CD4-positive, alpha-beta memory T cell (primary cell): ENCODE measurements at regions of chr17 and their contacts with region 1.

Region 1: DNA sequence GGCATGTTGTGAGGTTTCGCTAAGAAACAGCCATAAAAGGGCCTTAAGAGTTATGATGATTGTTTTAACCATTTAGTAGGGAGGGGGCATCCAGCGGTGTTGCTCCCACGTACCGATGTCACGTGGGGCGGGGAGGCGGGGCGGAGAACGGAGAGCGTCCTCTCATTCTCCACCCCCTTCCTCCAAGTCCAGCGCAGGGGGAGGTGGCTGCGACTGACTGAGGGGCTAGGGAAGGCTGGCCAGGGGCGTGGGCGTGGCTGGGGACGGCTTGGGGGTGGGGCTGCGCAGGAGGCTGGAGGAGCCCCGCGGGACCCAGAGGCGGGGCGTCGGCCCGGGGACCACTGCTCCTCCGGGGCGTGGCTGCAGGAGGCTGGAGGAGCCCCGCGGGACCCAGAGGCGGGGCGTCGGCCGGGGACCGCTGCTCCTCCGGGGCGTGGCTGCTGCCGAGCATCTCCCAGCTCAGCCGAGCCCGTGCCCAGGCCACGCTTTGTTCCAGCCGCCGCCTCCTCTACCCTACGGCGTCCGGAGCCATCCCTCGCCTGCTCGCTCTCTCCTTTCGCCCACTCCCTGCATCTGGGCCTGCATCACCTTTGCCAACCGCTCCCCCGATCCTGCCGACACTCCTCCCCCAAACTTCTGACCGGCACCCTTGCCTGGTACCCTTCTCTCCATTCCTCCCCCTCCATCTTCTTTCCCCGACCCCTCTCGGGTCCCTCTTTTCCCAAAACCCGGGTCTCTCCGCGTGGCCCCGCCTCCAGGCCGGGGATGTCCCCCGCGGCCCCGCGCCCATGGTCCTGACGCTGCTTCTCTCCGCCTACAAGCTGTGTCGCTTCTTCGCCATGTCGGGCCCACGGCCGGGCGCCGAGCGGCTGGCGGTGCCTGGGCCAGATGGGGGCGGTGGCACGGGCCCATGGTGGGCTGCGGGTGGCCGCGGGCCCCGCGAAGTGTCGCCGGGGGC is at the start of gene SARM1:
- DNase-seq: peak; percentile 73 to 87 (median 79)
- H3K4me3 ChIP-seq: peak within 1 kb of the TSS in 1 of 2 donors; percentile 81
- H3K4me3 Mint-ChIP-seq: peak within 1 kb of the TSS; percentile 91 to 100 (median 96)
- H3K27ac ChIP-seq: peak within 1 kb of the TSS; percentile 85
- H3K27ac Mint-ChIP-seq: peak within 1 kb of the TSS; percentile 88 to 99 (median 97)
- H3K4me1 ChIP-seq: peaks cover 14% of the 10 kb centered on the region
- H3K4me1 Mint-ChIP-seq: peaks cover 13 to 29% (median 17%) of the 10 kb centered on the region in 4 donors
- H3K27me3 ChIP-seq: no peaks in the 10 kb centered on the region
- H3K27me3 Mint-ChIP-seq: no peaks in the 10 kb centered on the region
- total RNA-seq, gene SARM1: 37.6 to 40.3 TPM

Region 2: DNA sequence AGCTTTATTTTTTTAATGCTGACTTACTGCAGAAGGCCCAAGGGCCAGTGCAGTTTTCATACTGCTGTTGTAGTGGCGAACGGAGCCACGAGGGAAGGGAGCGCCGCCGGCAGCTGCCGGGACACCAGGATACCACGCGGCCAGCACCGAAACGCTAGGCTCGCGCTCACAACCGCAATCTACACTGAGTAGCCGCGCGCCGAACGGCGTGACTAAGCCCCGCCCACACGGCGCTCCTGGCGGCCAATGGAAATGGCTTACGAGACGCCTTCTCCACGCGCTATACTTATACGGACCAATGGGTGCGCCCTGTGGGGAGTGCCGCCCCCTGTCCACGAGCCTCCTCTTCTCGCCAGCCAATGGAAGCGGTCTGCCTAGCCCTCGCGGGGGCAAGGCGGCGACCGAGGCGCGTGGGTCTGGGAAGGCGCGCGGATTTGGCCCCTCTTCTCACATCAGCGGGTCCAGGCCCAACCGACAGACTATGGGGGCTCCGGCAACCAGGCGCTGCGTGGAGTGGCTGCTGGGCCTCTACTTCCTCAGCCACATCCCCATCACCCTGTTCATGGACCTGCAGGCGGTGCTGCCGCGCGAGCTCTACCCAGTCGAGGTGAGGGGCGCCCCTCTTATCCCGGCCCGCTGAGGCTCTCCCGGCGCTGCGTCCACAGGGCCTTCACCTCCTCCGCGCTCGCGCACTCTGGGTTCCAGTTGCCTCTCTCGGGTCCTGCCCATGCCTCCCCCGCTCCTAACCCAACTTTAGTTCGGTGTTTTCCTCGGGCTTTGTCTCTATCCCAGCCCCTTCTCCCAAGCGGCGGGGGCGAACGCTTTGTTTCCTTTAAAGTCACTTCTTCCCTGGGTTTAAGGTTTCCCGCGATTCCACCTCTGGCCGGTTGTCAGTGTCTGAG is 52.5 kb before region 1 on chr17 and contains the start of gene TMEM97:
- CTCF ChIA-PET with region 1: no interaction called
- POLR2A ChIA-PET with region 1: interaction called, 4 read pairs
- intact Hi-C with region 1: loop called (anchors 1 kb)
- DNase-seq: peak; percentile 93 to 96 (median 95)
- H3K4me3 ChIP-seq: peak within 1 kb of the TSS; percentile 58 to 69
- H3K4me3 Mint-ChIP-seq: peak within 1 kb of the TSS; percentile 87 to 95 (median 91)
- H3K27ac ChIP-seq: peak within 1 kb of the TSS; percentile 45
- H3K27ac Mint-ChIP-seq: peak within 1 kb of the TSS; percentile 69 to 90 (median 86)
- H3K4me1 ChIP-seq: peaks cover 19% of the 10 kb centered on the region
- H3K4me1 Mint-ChIP-seq: peaks cover 15 to 32% (median 21%) of the 10 kb centered on the region in 4 donors
- H3K27me3 ChIP-seq: no peaks in the 10 kb centered on the region
- H3K27me3 Mint-ChIP-seq: no peaks in the 10 kb centered on the region
- total RNA-seq, gene TMEM97: 2.4 to 2.6 TPM

Region 3: DNA sequence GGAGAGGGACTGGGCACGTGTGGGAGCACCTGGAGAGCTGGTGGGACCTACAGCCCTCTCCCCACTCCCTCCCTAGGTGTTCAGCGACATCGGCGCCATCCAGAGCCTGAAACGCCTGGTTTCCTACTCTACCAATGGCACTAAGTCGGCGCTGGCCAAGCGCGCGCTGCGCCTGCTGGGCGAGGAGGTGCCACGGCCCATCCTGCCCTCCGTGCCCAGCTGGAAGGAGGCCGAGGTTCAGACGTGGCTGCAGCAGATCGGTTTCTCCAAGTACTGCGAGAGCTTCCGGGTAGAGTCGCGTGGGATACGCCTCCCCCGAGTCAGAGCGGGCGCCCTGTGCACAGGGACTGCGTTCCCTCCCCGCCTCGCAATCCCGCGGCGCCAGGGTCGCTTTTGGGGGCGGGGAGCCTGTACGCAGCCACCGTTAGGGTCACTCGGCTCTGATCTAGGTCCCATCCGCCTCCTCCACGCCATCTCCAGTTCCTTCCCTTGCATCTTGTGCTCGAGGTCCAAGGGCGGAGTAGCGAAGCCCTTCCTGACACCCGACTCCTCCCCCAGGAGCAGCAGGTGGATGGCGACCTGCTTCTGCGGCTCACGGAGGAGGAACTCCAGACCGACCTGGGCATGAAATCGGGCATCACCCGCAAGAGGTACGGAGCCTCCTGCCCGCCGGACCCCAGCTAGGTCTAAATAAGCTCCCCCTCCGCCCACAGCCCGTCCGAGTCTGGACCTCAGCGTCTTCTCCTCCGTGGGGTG is 12.9 kb after region 1 on chr17:
- CTCF ChIA-PET with region 1: interaction called, 6 read pairs
- POLR2A ChIA-PET with region 1: interaction called, 41 read pairs
- intact Hi-C with region 1: loop called (anchors 1 kb)
- DNase-seq: peak; percentile 50 to 71 (median 58)
- H3K4me3 ChIP-seq: peak overlapping the region; percentile 86 to 91
- H3K4me3 Mint-ChIP-seq: peak overlapping the region; percentile 92 to 97 (median 95)
- H3K27ac ChIP-seq: peak overlapping the region; percentile 50
- H3K27ac Mint-ChIP-seq: peak overlapping the region; percentile 59 to 94 (median 90)
- H3K4me1 ChIP-seq: peaks cover 22% of the 10 kb centered on the region
- H3K4me1 Mint-ChIP-seq: peaks cover 15 to 32% (median 29%) of the 10 kb centered on the region in 4 donors
- H3K27me3 ChIP-seq: no peaks in the 10 kb centered on the region
- H3K27me3 Mint-ChIP-seq: peaks cover 0 to 2% of the 10 kb centered on the region in 2 donors